ENCODE measurements at regions of chr4 and their contacts with region 1.

Region 1: GRCh38 chr4:87679449-87680169 is 29.5 kb downstream of the DMP1 start:
- DNase-seq: peak in 3 of 6 donors; percentile 4 to 36 (median 32)
- ATAC-seq: peak in 3 of 4 donors; percentile 66 to 81 (median 69)
- H3K4me3 ChIP-seq: no peak overlapping the region
- H3K27ac ChIP-seq: no peak overlapping the region
- H3K4me1 ChIP-seq: no peaks in the 10 kb centered on the region
- H3K27me3 ChIP-seq: no peaks in the 10 kb centered on the region
- CTCF ChIP-seq: peak; percentile 19 to 71 (median 65)

Region 2: DNA sequence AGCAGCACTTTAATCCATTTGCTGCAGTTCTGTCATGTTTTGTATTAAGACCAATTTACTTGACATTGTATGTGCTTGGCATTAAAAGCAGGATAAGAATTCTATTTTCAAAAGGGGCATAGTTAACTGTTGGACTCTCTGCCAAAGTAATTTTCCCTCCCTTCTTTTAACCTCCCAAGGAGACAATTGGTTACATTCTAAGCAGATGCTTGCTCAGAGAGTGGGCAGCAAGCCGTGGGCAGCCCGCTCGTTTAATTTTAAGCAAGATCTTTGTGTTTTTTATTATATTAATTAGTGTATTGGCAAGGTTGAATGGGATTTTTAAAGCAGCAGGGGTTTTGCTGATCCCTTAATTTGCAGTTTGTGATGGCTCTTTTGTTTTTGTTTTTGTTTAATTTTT is 422.1 kb before region 1 on chr4:
- intact Hi-C with region 1: no loop called
- DNase-seq: no peak
- ATAC-seq: no peak
- H3K4me3 ChIP-seq: no peak overlapping the region
- H3K27ac ChIP-seq: no peak overlapping the region
- H3K4me1 ChIP-seq: no peaks in the 10 kb centered on the region
- H3K27me3 ChIP-seq: no peaks in the 10 kb centered on the region
- CTCF ChIP-seq: no peak

Region 3: GRCh38 chr4:87819281-87819919 is 139.8 kb after region 1 on chr4:
- intact Hi-C with region 1: no loop called
- DNase-seq: no peak
- ATAC-seq: no peak
- H3K4me3 ChIP-seq: no peak overlapping the region
- H3K27ac ChIP-seq: no peak overlapping the region
- H3K4me1 ChIP-seq: no peaks in the 10 kb centered on the region
- H3K27me3 ChIP-seq: no peaks in the 10 kb centered on the region
- CTCF ChIP-seq: no peak

Region 4: GRCh38 chr4:87838890-87839591 is 159.4 kb after region 1 on chr4:
- intact Hi-C with region 1: loop called in 2 of 3 experiments (anchors 10 kb)
- DNase-seq: peak in 1 of 6 donors; percentile 22
- ATAC-seq: peak in 3 of 4 donors; percentile 78 to 83 (median 83)
- H3K4me3 ChIP-seq: no peak overlapping the region
- H3K27ac ChIP-seq: no peak overlapping the region
- H3K4me1 ChIP-seq: no peaks in the 10 kb centered on the region
- H3K27me3 ChIP-seq: no peaks in the 10 kb centered on the region
- CTCF ChIP-seq: peak; percentile 31 to 65 (median 54)

Region 5: DNA sequence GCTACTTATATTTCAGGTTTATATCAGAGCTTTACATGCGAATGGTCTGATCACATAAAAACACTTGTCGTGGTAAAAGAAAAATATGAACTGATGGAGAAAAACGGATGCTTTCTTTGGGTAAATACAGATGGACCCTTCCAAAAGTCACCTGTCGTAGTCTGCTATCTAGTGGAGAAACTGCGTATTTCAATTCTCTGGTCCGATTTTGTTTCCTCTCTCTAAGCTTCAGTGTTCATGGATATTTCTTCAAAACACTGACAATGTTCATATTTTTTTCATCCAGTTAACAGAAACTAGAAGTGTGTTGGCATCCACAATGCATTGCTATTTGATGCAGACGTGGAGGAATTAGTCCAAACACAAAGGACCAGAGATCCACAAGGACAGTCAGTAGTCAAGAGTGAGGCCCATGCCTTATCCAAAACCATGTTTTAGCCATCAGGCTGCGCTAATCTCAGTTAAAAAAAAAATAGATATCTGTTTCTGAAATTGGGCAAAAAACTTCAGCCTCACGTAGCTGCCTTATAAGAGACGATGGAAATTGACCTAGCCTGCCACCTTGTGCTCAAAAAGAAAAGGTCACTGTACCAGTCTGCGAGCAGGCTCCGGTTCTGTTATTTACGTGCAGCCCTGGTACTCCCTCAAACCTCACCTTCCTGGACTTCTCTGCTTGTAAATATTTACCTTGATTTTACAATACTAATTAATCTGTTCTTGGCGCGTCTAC is 169.2 kb after region 1 on chr4:
- intact Hi-C with region 1: loop called in 1 of 3 experiments (anchors 10 kb)
- DNase-seq: peak in 3 of 6 donors; percentile 21 to 54 (median 46)
- ATAC-seq: peak; percentile 87 to 90 (median 90)
- H3K4me3 ChIP-seq: no peak overlapping the region
- H3K27ac ChIP-seq: no peak overlapping the region
- H3K4me1 ChIP-seq: peaks cover 0 to 16% (median 0%) of the 10 kb centered on the region in 3 donors
- H3K27me3 ChIP-seq: no peaks in the 10 kb centered on the region
- CTCF ChIP-seq: peak; percentile 15 to 56 (median 48)

Region 6: DNA sequence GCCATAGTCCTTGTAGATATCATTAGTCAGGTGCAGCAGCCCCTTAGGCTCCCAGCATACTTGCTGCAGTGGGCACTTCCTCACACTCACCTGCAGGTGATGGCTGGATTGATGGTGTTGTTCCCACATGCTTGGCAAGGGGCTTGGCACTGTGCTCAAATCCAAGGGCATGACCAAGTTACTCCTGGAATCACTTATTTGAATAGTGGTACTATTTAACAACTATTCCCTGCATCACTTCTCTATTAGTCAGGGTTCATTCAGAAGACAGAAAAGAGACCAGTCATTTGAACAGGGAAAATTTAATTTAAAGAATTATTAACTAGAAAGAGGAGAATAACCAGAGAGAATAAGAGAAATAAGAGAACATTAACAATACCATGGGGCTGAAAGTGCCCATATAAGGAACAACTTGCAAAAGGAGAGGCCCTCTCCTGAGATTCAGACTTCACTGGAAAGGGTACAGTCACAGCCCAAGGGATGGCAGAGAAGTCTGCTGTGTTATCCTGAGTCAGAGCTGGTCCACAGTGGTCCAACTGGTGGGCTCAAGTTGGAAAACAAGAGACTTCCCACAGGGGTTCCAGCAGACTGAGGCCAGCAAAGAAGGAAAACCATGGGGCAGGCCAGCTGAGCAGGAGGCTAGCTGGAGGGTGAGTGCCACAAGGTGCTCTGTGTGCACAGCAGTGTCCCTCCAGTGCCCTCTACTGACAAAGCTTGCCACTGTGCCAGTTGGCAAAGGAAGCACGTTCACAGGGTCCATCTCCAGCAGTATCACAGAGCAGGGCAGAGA is 305.7 kb after region 1 on chr4:
- intact Hi-C with region 1: loop called in 1 of 3 experiments (anchors 10 kb)
- DNase-seq: peak; percentile 50 to 69 (median 62)
- ATAC-seq: peak; percentile 81 to 99 (median 96)
- H3K4me3 ChIP-seq: no peak overlapping the region
- H3K27ac ChIP-seq: peak overlapping the region in 1 of 4 donors; percentile 39
- H3K4me1 ChIP-seq: peaks cover 0 to 3% (median 0%) of the 10 kb centered on the region in 3 donors
- H3K27me3 ChIP-seq: no peaks in the 10 kb centered on the region
- CTCF ChIP-seq: peak; percentile 7 to 46 (median 38)

Region 7: DNA sequence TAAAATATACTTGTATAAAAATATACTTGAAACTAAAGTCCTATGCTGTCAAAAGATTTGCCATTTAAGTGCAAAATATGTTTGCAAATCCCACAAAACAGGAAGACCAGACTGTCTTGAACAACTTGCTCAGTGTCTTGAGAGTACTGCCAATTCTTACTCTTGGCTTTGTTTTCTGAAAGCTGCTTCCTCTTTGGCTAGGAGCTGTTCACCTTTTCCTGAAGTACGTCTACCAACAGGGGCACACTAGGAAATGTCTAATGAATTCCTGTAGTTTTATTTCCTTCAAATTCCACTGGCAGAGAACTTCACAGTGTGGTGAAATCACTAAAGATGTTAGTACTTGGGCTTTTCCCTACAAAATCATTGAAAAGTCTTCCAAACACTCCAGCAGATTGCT is 525.3 kb after region 1 on chr4:
- intact Hi-C with region 1: loop called in 1 of 3 experiments (anchors 10 kb)
- DNase-seq: no peak
- ATAC-seq: peak in 1 of 4 donors; percentile 29
- H3K4me3 ChIP-seq: no peak overlapping the region
- H3K27ac ChIP-seq: no peak overlapping the region
- H3K4me1 ChIP-seq: no peaks in the 10 kb centered on the region
- H3K27me3 ChIP-seq: no peaks in the 10 kb centered on the region
- CTCF ChIP-seq: no peak

Measured in pancreas (tissue), 10 donors.